ENCODE measurements at regions of chr5 and their contacts with region 1.

Region 1: DNA sequence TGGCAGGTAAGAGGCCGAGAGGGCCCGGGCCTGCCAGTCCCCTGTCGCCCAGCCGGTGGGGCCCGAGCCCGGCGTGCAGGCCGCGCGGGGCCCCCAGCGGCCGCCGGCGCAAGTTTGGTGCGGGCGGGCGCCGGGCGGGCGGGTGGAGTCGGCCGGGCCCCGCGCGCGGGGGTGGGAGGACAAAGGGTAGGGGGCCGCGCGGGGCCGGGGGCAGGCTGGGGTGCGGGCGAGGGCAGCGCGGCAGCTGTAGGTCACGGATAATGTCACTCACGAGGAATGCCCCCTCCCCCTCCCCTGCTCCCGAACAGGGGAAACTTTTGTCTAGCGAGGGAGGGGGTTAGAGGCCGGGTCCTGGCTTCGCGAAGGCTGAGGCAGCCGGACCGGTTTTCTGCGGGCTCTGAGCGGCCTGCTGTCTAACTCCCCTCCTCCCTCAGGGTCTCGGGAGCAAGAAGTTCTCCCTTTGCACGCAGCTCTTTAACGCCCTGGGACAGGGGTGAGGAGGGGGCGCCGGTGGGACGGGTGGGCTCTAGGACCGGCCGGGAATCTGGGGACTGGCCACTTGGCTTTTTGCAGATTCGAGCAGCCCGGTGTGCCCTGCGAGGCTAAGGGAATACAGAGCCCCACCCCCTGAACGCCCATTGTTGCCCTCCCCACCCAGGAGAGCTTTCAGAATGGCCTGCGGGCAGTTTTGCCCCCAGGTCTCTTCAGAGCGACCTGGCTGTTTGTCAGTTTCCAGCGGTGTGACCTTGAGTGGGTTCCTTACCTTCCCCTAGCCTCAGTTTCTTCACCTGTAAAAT is 21.3 kb upstream of the NDST1 start:
- DNase-seq: peak; percentile 53 to 74 (median 65)
- ATAC-seq: peak; percentile 28
- H3K4me3 ChIP-seq: peak overlapping the region; percentile 88
- H3K27ac ChIP-seq: peak overlapping the region; percentile 87
- H3K4me1 ChIP-seq: peaks cover 59 to 76% of the 10 kb centered on the region in 2 experiments
- H3K27me3 ChIP-seq: no peaks in the 10 kb centered on the region
- CTCF ChIP-seq: peak in 2 of 3 experiments; percentile 27 to 55; a peak in 3 of 6 replicates
- EP300 ChIP-seq: no peak
- POLR2A ChIP-seq: no peak
- RAD21 ChIP-seq: peak in 1 of 2 experiments; percentile 35; a peak in 2 of 4 replicates

Region 2: DNA sequence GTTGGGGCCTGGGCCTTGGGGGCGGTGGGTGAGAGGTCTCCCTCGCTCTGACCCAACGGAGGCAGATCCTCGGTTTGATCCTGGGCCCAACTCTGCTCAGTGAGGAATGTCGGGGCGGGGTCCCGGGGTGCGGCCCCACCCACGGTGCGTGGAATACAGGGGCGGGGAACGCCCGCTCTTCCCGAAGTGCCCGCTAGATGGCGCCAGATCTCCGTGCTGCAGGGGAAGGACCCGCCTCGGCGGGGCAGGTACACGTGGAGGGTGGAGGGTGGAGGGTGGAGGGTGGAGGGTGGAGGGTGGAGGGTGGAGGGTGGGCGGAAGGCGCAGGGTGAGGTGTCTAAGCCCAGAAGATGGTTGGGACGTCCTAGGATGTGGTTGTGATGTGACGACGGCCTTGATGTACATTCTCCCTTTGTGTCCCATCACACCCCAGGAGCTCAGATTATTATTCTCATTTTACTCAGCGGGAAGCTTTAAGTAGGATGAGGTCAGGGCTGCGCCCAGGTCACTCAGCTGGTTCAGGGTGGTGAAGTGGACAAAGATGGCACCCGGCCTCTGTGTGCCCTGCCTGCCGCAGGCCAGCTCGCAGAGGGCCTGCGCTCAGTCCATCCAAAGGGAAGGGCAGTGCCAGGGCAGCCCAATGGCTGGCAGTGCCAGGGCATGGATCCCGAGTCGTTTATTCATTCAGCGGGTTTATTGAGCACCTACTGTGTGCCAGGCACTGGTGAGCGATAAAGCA is 27.6 kb before region 1 on chr5:
- CTCF ChIA-PET with region 1: no interaction called
- POLR2A ChIA-PET with region 1: interaction called, 3 read pairs
- in situ Hi-C with region 1: no loop called
- intact Hi-C with region 1: loop called (anchors 2 kb)
- DNase-seq: peak; percentile 88 to 95 (median 92)
- ATAC-seq: peak; percentile 94
- H3K4me3 ChIP-seq: no peak overlapping the region
- H3K27ac ChIP-seq: no peak overlapping the region
- H3K4me1 ChIP-seq: peaks cover 23 to 39% of the 10 kb centered on the region in 2 experiments; a peak in 4 of 5 replicates
- H3K27me3 ChIP-seq: no peaks in the 10 kb centered on the region
- CTCF ChIP-seq: peak; percentile 68 to 92 (median 85)
- EP300 ChIP-seq: no peak
- POLR2A ChIP-seq: no peak
- RAD21 ChIP-seq: peak; percentile 67 to 80

Region 3: GRCh38 chr5:150498501-150498900 is 11.9 kb after region 1 on chr5:
- CTCF ChIA-PET with region 1: no interaction called
- POLR2A ChIA-PET with region 1: interaction called, 57 read pairs
- in situ Hi-C with region 1: no loop called
- intact Hi-C with region 1: no loop called
- DNase-seq: no peak
- ATAC-seq: no peak; the same call in 2 of the 3 replicates
- H3K4me3 ChIP-seq: no peak overlapping the region
- H3K27ac ChIP-seq: no peak overlapping the region
- H3K4me1 ChIP-seq: peaks cover 33 to 54% of the 10 kb centered on the region in 2 experiments
- H3K27me3 ChIP-seq: no peaks in the 10 kb centered on the region
- CTCF ChIP-seq: no peak
- EP300 ChIP-seq: no peak
- POLR2A ChIP-seq: no peak
- RAD21 ChIP-seq: no peak

Region 4: DNA sequence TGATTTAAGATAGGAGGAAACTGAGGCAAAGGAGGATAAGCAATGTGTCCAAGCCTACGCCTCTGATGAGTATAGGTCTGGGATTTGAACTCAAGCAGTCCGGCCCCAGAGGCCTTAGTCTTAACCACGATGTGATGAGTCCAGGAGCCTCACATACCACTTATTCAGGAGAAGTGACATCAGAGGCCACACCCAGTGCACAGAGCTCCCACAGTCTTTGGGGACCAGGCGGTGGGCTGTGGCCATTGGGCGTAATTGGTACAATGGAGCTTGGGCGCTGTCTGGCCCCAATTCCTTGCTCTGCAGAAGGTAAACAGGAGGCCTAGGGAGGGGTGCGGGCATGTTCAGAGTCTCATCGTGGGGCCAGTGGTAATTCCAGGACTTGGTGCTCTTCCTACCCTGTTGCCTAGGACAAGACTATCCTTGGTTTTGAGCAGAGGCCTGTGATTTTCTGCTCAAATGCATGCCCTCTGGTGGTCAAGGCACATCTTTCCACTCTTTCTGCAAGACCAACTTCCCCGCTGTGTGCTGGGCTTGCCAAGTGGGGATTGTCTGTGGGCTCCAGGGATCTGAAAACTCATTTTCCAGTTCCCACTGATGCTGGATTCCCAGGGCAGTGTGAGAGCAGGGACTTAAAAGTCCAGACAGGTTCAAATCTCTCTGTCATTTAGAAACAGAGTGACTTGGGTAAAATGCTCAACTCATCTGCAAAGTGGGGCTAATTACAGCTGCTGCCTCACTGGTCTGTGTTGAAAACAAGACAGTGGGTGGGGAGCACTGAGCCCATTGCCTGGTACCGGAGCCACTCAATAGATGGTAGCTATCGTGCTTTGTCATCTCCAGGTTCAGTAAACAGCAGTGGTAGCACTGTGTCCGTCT is 37.1 kb after region 1 on chr5:
- CTCF ChIA-PET with region 1: no interaction called
- POLR2A ChIA-PET with region 1: no interaction called
- in situ Hi-C with region 1: no loop called
- intact Hi-C with region 1: loop called (anchors 5 kb)
- DNase-seq: peak; percentile 51 to 64 (median 57)
- ATAC-seq: peak; percentile 95
- H3K4me3 ChIP-seq: no peak overlapping the region
- H3K27ac ChIP-seq: no peak overlapping the region
- H3K4me1 ChIP-seq: peaks cover 3 to 25% of the 10 kb centered on the region in 2 experiments; a peak in 3 of 5 replicates
- H3K27me3 ChIP-seq: no peaks in the 10 kb centered on the region
- CTCF ChIP-seq: peak; percentile 68 to 71 (median 69)
- EP300 ChIP-seq: no peak
- POLR2A ChIP-seq: no peak
- RAD21 ChIP-seq: peak; percentile 62 to 79

Region 5: GRCh38 chr5:150544611-150545219 is 58.1 kb after region 1 on chr5:
- CTCF ChIA-PET with region 1: no interaction called
- POLR2A ChIA-PET with region 1: no interaction called
- in situ Hi-C with region 1: no loop called
- intact Hi-C with region 1: loop called (anchors 5 kb)
- DNase-seq: peak; percentile 87 to 95 (median 92)
- ATAC-seq: peak; percentile 100
- H3K4me3 ChIP-seq: no peak overlapping the region
- H3K27ac ChIP-seq: no peak overlapping the region
- H3K4me1 ChIP-seq: peaks cover 0 to 4% of the 10 kb centered on the region in 2 experiments; a peak in 2 of 5 replicates
- H3K27me3 ChIP-seq: no peaks in the 10 kb centered on the region
- CTCF ChIP-seq: peak; percentile 97 to 99 (median 99)
- EP300 ChIP-seq: no peak
- POLR2A ChIP-seq: no peak
- RAD21 ChIP-seq: peak; percentile 75 to 88

Region 6: DNA sequence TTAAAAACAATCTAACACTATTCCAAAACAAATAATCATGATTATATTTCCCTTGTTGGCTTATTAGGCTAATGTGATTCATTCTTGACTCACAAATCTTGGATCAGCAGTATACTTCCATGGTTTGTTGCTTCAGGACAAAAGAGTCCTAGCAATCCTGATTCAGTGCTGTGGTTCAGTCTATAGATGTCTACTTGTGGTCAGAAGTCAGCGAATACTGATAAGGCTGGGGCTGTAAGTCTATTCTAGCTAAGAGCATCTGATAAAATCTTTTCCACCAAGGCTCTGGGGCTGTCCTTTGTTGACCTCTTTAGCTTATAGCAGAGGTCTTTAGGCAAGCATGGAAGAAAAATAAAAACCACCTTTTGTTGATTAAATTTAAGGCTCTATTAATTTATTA is 287.5 kb after region 1 on chr5:
- CTCF ChIA-PET with region 1: no interaction called
- POLR2A ChIA-PET with region 1: no interaction called
- in situ Hi-C with region 1: no loop called
- intact Hi-C with region 1: no loop called
- DNase-seq: peak; percentile 29 to 72 (median 48)
- ATAC-seq: peak; percentile 61
- H3K4me3 ChIP-seq: no peak overlapping the region
- H3K27ac ChIP-seq: peak overlapping the region; percentile 5; the same call in 1 of the 3 replicates
- H3K4me1 ChIP-seq: peaks cover 28 to 40% of the 10 kb centered on the region in 2 experiments
- H3K27me3 ChIP-seq: no peaks in the 10 kb centered on the region
- CTCF ChIP-seq: no peak
- EP300 ChIP-seq: peak; percentile 83
- POLR2A ChIP-seq: no peak
- RAD21 ChIP-seq: peak; percentile 17 to 20; a peak in 2 of 4 replicates

Region 7: DNA sequence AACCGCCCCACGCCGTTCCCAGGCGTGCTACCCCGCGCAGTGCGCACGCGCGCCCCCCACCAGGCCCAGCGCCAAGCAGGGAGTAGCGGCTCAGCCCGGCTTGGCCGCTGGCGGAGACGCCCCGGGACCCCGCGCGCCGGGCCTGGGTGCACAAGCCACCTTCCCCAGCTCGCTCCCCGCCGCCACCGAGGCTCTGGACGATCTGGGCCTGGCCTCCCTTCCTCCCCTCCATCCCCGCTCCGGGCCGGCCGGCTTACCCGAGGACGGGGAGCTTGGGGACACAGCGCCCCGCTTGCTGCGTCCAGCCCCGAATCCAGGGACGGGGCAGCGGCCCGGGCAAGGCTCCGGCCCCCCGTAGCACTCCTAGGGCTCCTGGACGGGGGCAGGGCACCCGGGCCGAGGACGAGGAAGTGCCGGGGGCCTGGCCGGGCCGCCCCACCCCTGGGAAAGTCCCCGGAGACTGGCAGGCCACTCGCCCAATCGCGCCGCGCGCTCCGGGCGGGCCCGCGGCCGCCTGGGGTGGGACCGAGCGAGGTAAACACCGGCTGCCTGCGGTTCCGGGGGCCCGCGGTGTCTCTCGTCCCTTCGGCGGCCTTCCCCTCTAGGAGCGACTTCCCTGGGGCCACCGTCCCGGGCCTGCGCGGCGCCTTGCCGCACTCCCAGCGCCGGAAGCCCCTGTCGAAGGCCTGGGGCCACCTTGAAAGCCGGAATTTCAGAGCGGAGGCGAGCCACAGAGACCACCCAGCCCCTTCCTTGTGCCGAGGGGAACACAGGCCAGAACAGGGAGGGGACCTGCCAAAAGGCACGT is 594.2 kb after region 1 on chr5 and contains the start of gene TNIP1:
- CTCF ChIA-PET with region 1: no interaction called
- POLR2A ChIA-PET with region 1: no interaction called
- in situ Hi-C with region 1: no loop called
- intact Hi-C with region 1: loop called (anchors 10 kb)
- DNase-seq: peak; percentile 95 to 100 (median 99)
- ATAC-seq: peak; percentile 98
- H3K4me3 ChIP-seq: peak within 1 kb of the TSS; percentile 92
- H3K27ac ChIP-seq: peak within 1 kb of the TSS; percentile 95
- H3K4me1 ChIP-seq: peaks cover 20 to 24% of the 10 kb centered on the region in 2 experiments; a peak in 4 of 5 replicates
- H3K27me3 ChIP-seq: no peaks in the 10 kb centered on the region
- CTCF ChIP-seq: no peak
- EP300 ChIP-seq: no peak
- POLR2A ChIP-seq: peak; percentile 82
- RAD21 ChIP-seq: no peak
- polyA plus RNA-seq, gene TNIP1: 0.46 to 0.99 TPM